Cardiac septum (tissue), 1 donor: ENCODE measurements at regions of chr11 and their contacts with region 1.

Region 1: DNA sequence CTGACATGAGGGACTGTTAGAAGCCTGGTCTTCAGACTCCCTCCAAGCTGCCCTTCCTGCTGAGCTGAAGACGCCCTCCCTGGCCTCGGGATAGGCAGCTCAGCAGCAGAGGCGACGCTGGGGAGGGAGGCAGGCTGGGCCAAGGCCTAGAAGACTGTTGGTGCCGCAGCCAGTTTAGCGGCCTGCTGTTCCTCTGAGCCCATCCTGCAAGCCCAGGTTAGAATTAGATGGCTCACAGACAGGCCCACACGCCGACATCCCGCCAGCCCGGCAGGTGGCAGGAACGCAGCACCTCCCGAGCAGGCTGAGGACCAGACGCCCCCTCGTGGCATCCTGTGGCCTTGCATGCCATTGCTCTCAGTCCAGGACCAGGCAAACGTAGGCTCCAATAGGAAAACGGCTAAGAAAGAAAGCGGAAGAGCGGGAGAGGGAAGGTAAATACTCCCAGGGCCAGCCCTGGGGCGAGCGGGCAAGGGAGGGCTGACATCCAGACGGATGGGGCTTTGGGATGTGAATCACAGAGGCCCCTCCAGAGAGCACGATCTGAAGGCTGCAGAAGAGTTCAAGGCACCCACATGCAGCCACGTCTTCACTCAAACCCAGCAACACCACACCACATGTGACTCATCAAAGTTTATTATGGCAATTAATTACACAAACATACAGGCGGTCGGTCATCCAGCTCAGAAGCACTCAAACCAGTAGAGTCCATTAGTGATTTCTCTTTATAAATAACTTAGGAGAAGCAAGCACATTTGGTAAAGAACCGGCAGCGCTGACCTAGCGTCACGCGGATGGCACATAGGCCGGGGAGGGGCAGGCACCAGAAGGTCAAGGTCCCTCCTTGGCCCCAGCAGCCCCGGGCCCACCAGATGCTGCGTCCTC is 27.6 kb downstream of the CD5 start:
- DNase-seq: peak; percentile 93

Region 2: DNA sequence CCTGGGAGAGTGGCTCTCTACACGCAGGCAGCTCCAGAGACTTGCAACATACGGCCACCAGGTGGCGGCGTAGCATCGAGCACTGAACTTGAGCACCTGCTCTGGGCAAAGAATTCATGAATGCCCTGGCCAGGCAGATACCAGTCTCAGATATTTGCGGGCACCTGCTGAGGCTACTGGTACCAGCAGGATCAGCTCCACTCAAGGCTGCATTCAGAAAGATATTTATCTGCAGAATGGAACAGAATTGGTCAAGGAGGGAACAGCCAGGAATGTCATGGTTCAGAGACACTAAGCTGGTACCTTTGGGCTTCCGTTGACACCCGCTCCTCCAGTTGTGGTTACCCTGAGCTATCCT is 298.8 kb before region 1 on chr11:
- intact Hi-C with region 1: loop called (anchors 5 kb)
- DNase-seq: peak; percentile 91

Region 3: GRCh38 chr11:60970369-60970774 is 159.5 kb before region 1 on chr11:
- intact Hi-C with region 1: loop called (anchors 2 kb)
- DNase-seq: peak; percentile 86

Region 4: DNA sequence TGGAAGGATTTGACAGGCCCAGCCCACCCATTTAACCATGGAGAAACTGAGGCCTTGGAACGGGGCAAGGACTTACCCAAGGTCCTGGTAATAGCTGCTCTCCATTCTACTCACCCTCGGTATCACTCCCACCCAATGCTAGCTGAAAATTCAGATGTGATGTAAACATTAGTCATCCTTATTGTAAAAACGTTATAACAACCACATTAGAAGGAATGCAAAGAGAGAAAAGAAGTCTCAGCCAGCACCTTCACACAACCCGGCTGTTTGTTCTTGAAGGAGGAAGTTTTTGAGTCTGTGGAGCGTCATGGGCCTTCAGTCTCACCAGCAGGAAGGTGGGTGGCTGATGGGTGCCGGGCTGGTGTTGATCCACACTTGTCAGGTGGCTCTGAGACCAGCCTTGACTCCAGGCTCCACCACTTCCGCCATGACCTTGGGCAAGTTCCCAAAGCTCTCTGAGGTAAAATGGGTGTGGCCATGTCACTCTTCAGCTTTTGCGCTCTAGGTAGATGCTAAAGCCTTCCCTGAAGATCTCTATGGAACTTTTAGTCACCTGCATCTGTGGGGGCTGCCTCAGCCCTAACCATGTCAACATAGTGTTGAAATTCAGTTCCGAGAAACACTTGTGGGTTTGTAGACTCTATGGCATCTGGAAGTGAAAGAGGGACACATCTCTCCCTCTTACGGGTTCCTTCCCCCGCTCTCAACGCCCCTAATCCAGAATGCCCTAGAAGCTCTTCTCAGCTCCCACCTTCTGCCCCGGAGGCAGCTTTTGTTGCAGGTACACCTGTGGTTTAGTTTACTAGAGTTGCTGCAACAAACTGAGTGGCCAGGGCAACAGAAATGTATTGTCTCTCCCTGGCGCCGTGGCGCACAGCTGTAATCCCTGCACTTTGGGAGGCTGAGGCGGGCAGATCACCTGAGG is 143.6 kb before region 1 on chr11:
- intact Hi-C with region 1: no loop called
- DNase-seq: peak; percentile 59

Region 5: DNA sequence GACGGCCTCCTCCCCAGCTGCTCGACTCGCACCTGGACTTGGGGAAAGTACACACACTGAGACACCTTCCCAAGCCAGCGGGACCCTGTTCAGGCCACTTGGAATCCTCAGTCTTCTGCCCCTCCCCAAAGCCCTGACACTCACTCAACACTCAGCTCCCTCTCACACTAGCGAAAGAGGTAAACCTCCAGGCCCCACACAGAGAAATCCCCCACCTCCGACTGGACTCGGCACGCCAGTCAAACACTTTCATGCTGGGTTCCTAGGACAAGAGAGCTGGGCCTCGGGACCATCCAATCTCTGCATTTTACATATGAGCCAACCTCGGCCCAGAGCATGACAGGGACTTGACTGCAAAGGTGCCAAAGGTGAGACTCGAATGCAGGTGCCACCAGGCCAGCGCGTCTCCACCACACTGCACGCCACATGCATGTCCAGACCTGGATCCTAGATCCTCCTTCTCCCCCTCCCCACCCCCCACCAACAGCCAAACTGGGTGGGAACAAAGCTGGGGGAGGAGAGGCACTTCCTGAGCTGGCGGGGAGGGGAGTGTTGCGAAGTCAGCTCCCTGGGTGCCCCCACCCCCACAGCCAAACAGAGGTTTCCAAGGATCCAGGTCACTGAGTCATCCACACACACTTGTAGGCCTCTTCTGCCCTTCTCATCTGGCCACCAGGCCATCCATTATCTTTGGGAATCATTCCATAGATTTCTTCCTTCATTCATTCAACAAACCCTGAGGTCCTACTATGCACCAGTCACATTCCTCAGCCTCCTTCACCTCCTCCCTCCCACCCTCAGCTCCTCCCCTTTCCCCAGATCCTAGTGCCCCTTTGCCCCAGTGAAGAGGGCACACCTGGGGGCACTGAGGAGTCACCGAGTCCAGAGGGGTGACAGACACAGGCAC is 38.3 kb before region 1 on chr11:
- intact Hi-C with region 1: no loop called
- DNase-seq: peak; percentile 49

Region 6: GRCh38 chr11:61187505-61188130 is 57.7 kb after region 1 on chr11:
- intact Hi-C with region 1: loop called (anchors 2 kb)
- DNase-seq: no peak

Region 7: GRCh38 chr11:61460474-61460881 is 330.6 kb after region 1 on chr11:
- intact Hi-C with region 1: no loop called
- DNase-seq: no peak